ENCODE measurements at regions of chr2 and their contacts with region 1.

Region 1: DNA sequence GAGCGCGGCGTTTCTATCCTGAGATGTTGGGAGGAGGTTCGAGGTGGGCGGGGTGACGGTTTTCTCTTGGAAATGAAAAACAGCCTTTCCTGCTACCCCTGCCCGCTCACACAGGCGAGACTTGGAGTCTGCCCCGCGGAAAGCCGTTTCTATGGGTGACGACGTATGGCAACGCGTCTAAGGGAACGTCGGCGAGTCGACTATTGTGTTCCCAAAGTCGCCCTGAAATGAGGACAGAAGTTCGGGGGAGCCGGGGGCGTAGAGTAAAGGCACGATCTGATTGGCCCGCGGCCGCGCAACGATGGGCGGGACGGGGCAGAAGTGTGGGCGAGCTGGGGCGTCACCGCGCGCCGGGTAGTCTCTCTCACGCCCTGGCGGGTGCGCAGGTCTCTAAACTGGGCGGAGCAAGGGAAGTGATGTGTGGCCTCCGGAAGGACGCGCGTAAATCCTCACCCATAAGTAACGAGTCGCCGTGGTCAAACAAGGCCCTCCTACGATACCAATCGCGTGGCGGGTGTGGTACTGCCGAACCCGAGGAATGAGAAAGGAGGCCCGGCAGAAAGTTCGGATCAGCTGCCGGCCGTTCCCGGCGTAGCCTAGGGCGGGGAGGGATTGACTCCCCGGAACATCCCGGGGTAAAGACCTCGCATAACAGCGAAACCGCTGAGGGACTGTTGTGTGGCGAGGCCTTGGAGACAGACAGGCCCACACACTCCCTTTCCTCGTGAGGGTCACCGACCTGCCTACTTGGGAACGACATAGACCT is 89.6 kb downstream of the FAM161A start:
- DNase-seq: peak; percentile 98
- H3K4me3 ChIP-seq: peak overlapping the region; percentile 57 to 75
- H3K27ac ChIP-seq: peak overlapping the region; percentile 98 to 99
- H3K4me1 ChIP-seq: no peaks in the 10 kb centered on the region
- H3K27me3 ChIP-seq: no peaks in the 10 kb centered on the region
- CTCF ChIP-seq: peak in 2 of 4 experiments; percentile 17
- POLR2A ChIP-seq: peak; percentile 79

Region 2: GRCh38 chr2:61144697-61145268 is 619.4 kb before region 1 on chr2:
- intact Hi-C with region 1: loop called (anchors 10 kb)
- DNase-seq: peak; percentile 91
- H3K4me3 ChIP-seq: peak overlapping the region; percentile 43 to 49
- H3K27ac ChIP-seq: peak overlapping the region; percentile 70 to 74
- H3K4me1 ChIP-seq: no peaks in the 10 kb centered on the region
- H3K27me3 ChIP-seq: no peaks in the 10 kb centered on the region
- CTCF ChIP-seq: peak in 1 of 4 experiments; percentile 22
- POLR2A ChIP-seq: peak; percentile 23

Region 3: DNA sequence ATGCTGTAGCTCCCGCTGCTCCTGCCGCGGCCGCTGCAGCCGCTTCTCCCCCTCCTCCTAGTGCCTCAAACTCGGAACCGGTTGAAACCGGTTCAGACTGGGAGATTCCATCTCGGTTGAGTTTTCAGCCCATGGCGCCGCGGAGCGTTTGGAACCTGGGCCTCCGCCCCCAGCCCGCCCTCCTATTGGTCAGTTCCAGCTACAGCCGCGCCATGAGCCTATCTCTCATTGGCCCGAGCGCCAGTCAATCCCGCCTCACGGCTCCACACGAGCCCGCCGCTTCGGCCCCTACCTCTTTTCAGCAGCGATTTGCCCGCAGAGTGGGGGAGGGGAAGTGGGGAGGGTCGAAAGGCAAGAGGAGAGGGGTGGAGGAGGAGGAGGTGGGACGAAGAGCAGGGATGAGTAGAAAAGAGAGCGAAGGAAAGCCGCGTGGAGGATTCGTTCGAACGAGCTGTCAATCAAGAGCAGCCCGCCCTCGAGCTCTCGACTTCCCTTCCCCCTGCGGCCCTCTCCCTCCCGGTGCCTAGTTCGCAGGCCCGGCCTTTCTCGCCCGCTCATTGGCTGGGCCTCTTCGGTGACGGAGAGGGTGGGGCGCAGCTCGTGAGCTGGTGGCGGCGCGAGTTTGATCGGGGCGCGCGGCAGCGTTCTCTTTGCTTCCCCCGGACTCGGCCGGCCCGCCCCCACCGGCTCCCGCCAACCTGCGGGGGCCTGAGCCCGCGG is 225.9 kb before region 1 on chr2 and contains the start of gene XPO1:
- intact Hi-C with region 1: loop called (anchors 1 kb)
- DNase-seq: peak; percentile 100
- H3K4me3 ChIP-seq: peak within 1 kb of the TSS; percentile 64 to 88
- H3K27ac ChIP-seq: peak within 1 kb of the TSS; percentile 99 to 100
- H3K4me1 ChIP-seq: no peaks in the 10 kb centered on the region
- H3K27me3 ChIP-seq: no peaks in the 10 kb centered on the region
- CTCF ChIP-seq: peak in 1 of 4 experiments; percentile 28
- POLR2A ChIP-seq: peak; percentile 98
- total RNA-seq, gene XPO1: 65.3 to 160 TPM

Region 4: GRCh38 chr2:61694312-61695274 is 69.6 kb before region 1 on chr2:
- intact Hi-C with region 1: loop called (anchors 2 kb)
- DNase-seq: peak; percentile 94
- H3K4me3 ChIP-seq: peak overlapping the region; percentile 64 to 65
- H3K27ac ChIP-seq: peak overlapping the region; percentile 82 to 84
- H3K4me1 ChIP-seq: no peaks in the 10 kb centered on the region
- H3K27me3 ChIP-seq: no peaks in the 10 kb centered on the region
- CTCF ChIP-seq: peak in 3 of 4 experiments; percentile 33 to 54 (median 54)
- POLR2A ChIP-seq: peak; percentile 78

Region 5: GRCh38 chr2:61707969-61708852 is 56.0 kb before region 1 on chr2:
- intact Hi-C with region 1: no loop called
- DNase-seq: peak; percentile 60
- H3K4me3 ChIP-seq: no peak overlapping the region
- H3K27ac ChIP-seq: peak overlapping the region; percentile 41 to 83
- H3K4me1 ChIP-seq: peaks cover 5% of the 10 kb centered on the region
- H3K27me3 ChIP-seq: no peaks in the 10 kb centered on the region
- CTCF ChIP-seq: no peak
- POLR2A ChIP-seq: no peak

Region 6: GRCh38 chr2:62010632-62011276 is 246.5 kb after region 1 on chr2:
- intact Hi-C with region 1: no loop called
- DNase-seq: no peak
- H3K4me3 ChIP-seq: no peak overlapping the region
- H3K27ac ChIP-seq: no peak overlapping the region
- H3K4me1 ChIP-seq: no peaks in the 10 kb centered on the region
- H3K27me3 ChIP-seq: no peaks in the 10 kb centered on the region
- CTCF ChIP-seq: no peak
- POLR2A ChIP-seq: no peak

Region 7: DNA sequence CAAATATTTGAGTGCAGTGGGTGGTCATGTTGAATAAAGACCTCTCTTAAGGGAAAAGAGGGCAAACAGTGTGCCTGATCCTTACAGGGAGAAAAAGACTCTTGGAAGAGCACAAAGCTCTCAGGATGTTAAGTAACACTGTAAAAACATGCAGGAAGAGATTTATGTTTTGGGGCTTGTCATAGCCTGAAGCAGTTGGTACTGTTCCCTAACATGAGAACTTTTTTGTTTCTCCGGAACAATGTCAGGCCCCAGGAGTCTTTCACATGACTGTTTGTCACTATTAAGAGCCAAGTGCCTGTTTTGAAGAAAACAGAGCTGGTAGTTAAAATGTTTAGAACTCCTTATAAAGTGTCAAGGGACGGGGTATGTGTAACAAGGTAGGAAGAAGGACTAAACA is 348.0 kb after region 1 on chr2:
- intact Hi-C with region 1: no loop called
- DNase-seq: peak; percentile 47
- H3K4me3 ChIP-seq: no peak overlapping the region
- H3K27ac ChIP-seq: peak overlapping the region; percentile 2 to 7
- H3K4me1 ChIP-seq: no peaks in the 10 kb centered on the region
- H3K27me3 ChIP-seq: no peaks in the 10 kb centered on the region
- CTCF ChIP-seq: no peak
- POLR2A ChIP-seq: no peak